CD8-positive, alpha-beta T cell (primary cell): ENCODE measurements at regions of chr1 and their contacts with region 1.

Region 1: DNA sequence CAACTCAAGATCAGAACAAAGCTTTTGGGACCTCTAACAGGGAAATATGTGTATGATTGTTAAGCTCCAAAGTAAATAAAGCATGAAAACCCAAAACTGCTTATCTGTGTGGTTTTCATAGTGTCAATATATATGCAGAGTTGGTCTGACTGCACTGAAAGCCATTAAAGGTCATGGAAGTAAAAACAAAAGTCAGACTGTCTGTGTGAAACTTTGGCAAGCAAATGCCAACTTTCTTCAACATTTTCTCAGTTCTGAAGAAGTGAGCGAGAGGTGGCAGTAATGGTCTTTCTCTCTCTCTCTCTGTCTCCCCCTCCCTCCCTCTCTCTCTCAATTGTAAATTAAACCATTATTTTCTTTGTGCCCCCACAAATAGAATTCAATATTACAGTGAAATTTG is 100.1 kb upstream of the S1PR1 start:
- DNase-seq: peak in 4 of 9 experiments; percentile 21 to 78 (median 50)
- ATAC-seq: peak; percentile 76
- H3K4me3 ChIP-seq: no peak overlapping the region
- H3K4me3 Mint-ChIP-seq: peak overlapping the region; percentile 13
- H3K27ac ChIP-seq: peak overlapping the region; percentile 12 to 50
- H3K27ac Mint-ChIP-seq: peak overlapping the region; percentile 85
- H3K4me1 ChIP-seq: peaks cover 35% of the 10 kb centered on the region
- H3K4me1 Mint-ChIP-seq: peaks cover 60% of the 10 kb centered on the region
- H3K27me3 ChIP-seq: no peaks in the 10 kb centered on the region
- H3K27me3 Mint-ChIP-seq: no peaks in the 10 kb centered on the region
- CTCF ChIP-seq: peak; percentile 58

Region 2: GRCh38 chr1:100921109-100921706 is 215.5 kb before region 1 on chr1:
- CTCF ChIA-PET with region 1: interaction called, 4 read pairs
- POLR2A ChIA-PET with region 1: interaction called, 3 read pairs
- intact Hi-C with region 1: loop called (anchors 1 to 5 kb)
- DNase-seq: peak in 2 of 9 experiments; percentile 70 to 77
- ATAC-seq: peak; percentile 45
- H3K4me3 ChIP-seq: no peak overlapping the region
- H3K4me3 Mint-ChIP-seq: no peak overlapping the region
- H3K27ac ChIP-seq: no peak overlapping the region
- H3K27ac Mint-ChIP-seq: peak overlapping the region; percentile 63
- H3K4me1 ChIP-seq: peaks cover 37% of the 10 kb centered on the region
- H3K4me1 Mint-ChIP-seq: peaks cover 41% of the 10 kb centered on the region
- H3K27me3 ChIP-seq: no peaks in the 10 kb centered on the region
- H3K27me3 Mint-ChIP-seq: no peaks in the 10 kb centered on the region
- CTCF ChIP-seq: peak; percentile 99

Region 3: GRCh38 chr1:101071470-101071891 is 65.3 kb before region 1 on chr1:
- CTCF ChIA-PET with region 1: no interaction called
- POLR2A ChIA-PET with region 1: no interaction called
- intact Hi-C with region 1: no loop called
- DNase-seq: no peak
- ATAC-seq: no peak
- H3K4me3 ChIP-seq: no peak overlapping the region
- H3K4me3 Mint-ChIP-seq: no peak overlapping the region
- H3K27ac ChIP-seq: no peak overlapping the region
- H3K27ac Mint-ChIP-seq: no peak overlapping the region
- H3K4me1 ChIP-seq: peaks cover 22% of the 10 kb centered on the region
- H3K4me1 Mint-ChIP-seq: peaks cover 48% of the 10 kb centered on the region
- H3K27me3 ChIP-seq: no peaks in the 10 kb centered on the region
- H3K27me3 Mint-ChIP-seq: no peaks in the 10 kb centered on the region
- CTCF ChIP-seq: no peak